ENCODE measurements at regions of chr2 and their contacts with region 1.

Region 1: GRCh38 chr2:180033993-180034894 is 27.1 kb upstream of the CWC22 start:
- DNase-seq: peak in 1 of 2 experiments; percentile 37
- H3K4me3 ChIP-seq: no peak overlapping the region
- H3K27ac ChIP-seq: no peak overlapping the region
- H3K4me1 ChIP-seq: no peaks in the 10 kb centered on the region
- H3K27me3 ChIP-seq: no peaks in the 10 kb centered on the region
- CTCF ChIP-seq: no peak

Region 2: DNA sequence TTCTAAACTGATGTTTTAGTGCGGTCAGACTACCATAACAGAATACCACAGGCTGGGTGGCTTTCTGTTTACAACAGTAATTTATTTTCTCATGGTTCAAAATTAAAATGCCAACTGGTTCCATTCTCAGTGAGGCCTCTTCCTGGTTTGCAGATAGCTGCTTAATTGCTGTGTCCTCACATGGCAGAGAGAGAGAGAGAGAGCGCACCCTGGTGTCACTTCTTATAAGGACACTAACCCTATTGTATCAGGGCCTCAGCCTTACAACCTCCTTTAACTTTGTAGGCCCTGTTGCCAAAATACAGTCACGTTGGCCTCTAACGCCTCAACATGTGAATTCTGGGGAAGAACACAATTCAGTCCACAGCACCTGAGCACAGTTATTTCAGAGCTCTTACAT is 135.4 kb before region 1 on chr2:
- CTCF ChIA-PET with region 1: interaction called, 13 read pairs
- POLR2A ChIA-PET with region 1: no interaction called
- intact Hi-C with region 1: no loop called
- DNase-seq: peak in 1 of 2 experiments; percentile 16
- H3K4me3 ChIP-seq: no peak overlapping the region
- H3K27ac ChIP-seq: no peak overlapping the region
- H3K4me1 ChIP-seq: no peaks in the 10 kb centered on the region
- H3K27me3 ChIP-seq: no peaks in the 10 kb centered on the region
- CTCF ChIP-seq: peak; percentile 66

Measured in PC-9 (cell line).